Left cardiac atrium (tissue), 4 donors: ENCODE measurements at regions of chr3 and their contacts with region 1.

Region 1: DNA sequence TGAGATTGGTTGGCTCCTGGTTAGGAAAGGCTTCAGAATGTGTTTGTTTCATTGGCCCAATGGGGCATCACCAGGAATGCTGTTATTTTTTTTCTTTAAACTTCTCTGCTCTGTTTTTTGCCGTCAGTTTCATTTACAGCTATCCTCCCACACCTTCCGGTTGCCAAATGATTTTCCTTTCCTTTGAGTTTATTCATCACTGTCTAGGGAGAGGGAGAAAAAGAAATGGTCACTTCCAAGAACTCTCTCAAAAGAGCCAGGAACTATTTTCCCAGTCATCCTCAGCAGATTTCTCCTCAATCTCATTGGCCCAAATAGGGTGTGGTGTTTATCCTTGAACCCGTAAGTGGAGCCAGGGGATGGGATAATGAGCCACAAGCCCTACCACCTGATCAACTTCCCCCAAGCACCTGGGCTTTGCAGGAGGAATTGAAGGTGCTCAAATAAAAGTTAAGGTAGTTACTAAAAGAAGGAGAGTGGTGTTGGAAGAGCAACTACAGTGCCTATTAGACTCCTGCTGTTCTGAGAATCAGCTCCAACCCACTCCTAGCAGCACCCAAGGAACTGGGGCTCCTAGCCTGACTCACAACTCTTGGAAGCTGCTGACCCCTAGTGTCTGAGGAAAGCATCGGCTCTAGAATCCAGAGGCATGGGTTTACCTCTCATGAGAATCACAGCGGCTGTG is 183.8 kb upstream of the IL12A start:
- DNase-seq: peak; percentile 67
- ATAC-seq: peak; percentile 91 to 96

Region 2: GRCh38 chr3:159322322-159322939 is 482.4 kb before region 1 on chr3:
- intact Hi-C with region 1: loop called in 1 of 2 experiments (anchors 10 kb)
- DNase-seq: peak; percentile 21
- ATAC-seq: peak; percentile 23 to 30

Region 3: GRCh38 chr3:159616212-159616825 is 188.5 kb before region 1 on chr3:
- intact Hi-C with region 1: loop called (anchors 1 to 5 kb)
- DNase-seq: peak; percentile 40
- ATAC-seq: peak; percentile 62 to 70

Region 4: GRCh38 chr3:159763602-159764489 is 41.0 kb before region 1 on chr3:
- intact Hi-C with region 1: loop called in 1 of 2 experiments (anchors 5 kb)
- DNase-seq: peak; percentile 82
- ATAC-seq: peak; percentile 72 to 76

Region 5: GRCh38 chr3:160150525-160150924 is 345.7 kb after region 1 on chr3:
- intact Hi-C with region 1: no loop called
- DNase-seq: no peak
- ATAC-seq: peak; percentile 47 to 93